Posterior cingulate gyrus (tissue), 11 donors: ENCODE measurements at regions of chr19 and their contacts with region 1.

Region 1: DNA sequence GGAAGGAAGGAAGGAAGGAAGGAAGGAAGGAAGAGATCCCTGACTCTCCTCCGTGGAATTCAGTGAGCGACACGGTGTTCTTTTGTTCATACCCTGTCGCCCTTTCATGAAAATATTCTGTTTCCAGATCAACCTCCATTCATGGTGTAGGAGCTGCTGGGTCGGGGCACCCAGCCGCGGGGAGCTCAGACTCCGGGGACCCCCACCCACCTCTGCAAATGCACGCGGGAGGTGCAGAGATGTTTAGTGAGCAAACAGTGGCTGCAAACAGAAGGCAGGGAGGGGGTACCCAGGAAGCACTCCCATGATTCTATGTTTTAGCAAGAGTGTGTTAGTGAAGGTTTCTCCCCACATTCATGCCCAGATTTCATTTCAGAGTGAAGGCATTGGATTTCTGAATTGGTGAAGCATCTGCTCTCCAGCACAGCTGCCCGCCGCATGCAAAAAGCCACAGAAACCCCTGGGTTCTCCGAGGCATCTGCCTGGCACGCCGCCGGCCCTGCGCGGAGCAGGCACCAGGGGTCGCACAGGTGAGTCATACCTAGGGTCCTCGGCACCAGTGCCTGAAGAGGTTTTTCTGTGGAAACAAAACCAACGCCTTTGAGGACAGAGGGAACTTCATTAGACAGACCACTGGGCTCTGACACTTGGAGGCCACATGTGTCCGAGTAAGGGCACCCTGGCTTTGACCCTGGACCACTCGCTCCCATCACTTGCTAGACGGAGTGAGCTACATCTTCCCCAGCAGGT is 80.6 kb downstream of the ZNF557 start:
- DNase-seq: no peak

Region 2: GRCh38 chr19:7069042-7069903 is 80.9 kb before region 1 on chr19 and contains the start of gene ZNF557:
- intact Hi-C with region 1: no loop called
- DNase-seq: peak; percentile 93 to 100 (median 98)

Region 3: GRCh38 chr19:7104747-7105447 is 45.2 kb before region 1 on chr19:
- intact Hi-C with region 1: loop called (anchors 1 kb)
- DNase-seq: peak in 1 of 10 donors; percentile 11

Region 4: GRCh38 chr19:7211204-7211951 is 61.2 kb after region 1 on chr19:
- intact Hi-C with region 1: no loop called
- DNase-seq: peak in 1 of 10 donors; percentile 21